HepG2 (cell line): ENCODE measurements at regions of chr7 and their contacts with region 1.

Region 1: DNA sequence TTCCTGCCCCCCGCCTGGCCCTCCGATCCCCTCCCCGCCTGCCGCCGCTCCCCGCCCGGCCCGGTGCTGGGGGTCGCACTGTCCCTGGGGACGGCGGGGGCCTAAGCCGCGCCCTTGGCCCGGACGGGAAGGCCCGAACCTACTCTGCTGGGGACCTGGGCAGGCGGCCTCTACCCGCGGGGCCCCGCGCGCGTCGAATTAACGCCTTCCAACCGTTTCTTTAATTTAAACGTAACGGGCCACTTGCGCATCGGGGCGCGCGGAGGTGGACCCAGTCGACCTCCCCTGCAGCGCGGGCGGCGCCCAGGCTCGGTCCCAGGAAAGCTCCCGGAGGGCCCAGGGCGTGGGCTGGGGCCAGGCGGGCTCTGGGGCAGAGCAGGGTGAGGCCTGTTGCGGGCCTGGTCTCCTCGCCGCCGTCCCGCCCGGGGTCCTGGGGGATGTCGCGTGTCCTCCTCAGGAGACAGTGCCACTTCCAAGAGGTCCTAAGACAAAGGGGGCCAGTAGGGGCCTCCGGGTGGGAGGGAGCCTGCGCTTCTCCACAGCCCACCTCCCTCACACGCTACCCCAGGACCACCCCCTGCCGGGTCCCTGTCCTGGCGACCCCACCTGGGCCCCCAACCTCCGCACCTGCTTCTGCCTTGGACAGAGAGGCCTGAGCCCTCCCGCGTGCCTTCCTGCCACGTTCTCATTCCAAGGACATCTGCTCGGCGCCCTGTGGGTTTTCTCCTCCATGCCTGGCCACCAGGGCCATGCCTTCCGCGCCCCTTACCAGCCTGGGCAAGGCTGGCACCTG is 658 bp upstream of the PTPRN2 start:
- DNase-seq: no peak
- ATAC-seq: 0 out of 3 replicates have a peak, but pooled peaks have one; percentile 0
- H3K4me3 ChIP-seq: peak overlapping the region in 1 of 3 experiments; percentile 29; a peak in 1 of 6 replicates
- H3K27ac ChIP-seq: peak overlapping the region; percentile 87
- H3K4me1 ChIP-seq: peaks cover 83% of the 10 kb centered on the region
- H3K27me3 ChIP-seq: no peaks in the 10 kb centered on the region; a peak in 1 of 5 replicates
- CTCF ChIP-seq: no peak
- EP300 ChIP-seq: no peak
- POLR2A ChIP-seq: no peak
- RAD21 ChIP-seq: no peak

Region 2: GRCh38 chr7:158633055-158633956 is 45.0 kb after region 1 on chr7:
- CTCF ChIA-PET with region 1: no interaction called
- POLR2A ChIA-PET with region 1: interaction called, 29 read pairs
- in situ Hi-C with region 1: no loop called
- intact Hi-C with region 1: loop called (anchors 5 kb)
- DNase-seq: no peak
- ATAC-seq: no peak; the same call in 1 of the 3 replicates
- H3K4me3 ChIP-seq: no peak overlapping the region
- H3K27ac ChIP-seq: no peak overlapping the region
- H3K4me1 ChIP-seq: peaks cover 17% of the 10 kb centered on the region
- H3K27me3 ChIP-seq: no peaks in the 10 kb centered on the region
- CTCF ChIP-seq: no peak
- EP300 ChIP-seq: no peak
- POLR2A ChIP-seq: no peak
- RAD21 ChIP-seq: no peak

Region 3: DNA sequence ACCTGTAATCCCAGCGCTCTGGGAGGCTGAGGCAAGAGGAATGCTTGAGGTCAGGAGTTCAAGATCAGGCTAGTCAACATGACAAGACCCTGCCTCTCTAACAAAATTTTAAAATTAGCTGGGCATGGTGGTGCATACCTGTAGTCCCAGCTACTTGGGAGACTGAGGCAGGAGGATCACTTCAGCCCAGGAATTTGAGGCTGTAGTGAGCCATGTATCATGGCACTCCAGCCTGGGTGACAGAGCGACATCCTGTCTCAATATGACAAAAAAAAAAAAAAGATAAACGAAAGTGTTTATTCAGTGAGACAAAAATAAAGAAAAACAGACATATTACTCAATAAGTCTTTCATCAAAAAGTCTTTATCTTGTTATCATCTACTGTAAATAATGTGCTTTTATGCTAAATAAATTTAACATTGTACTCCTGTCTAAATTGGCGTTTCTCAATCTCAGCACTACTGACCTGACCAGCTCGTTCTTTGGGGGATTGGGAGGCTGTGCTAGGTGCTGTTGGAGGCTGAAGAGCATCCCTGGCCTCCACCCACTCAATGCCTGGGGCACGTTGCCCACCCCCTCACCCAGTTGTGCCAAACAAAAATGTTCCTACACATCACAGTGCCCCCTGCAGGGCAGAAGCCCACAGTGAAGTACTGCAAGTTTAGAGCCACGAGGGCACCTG is 58.6 kb after region 1 on chr7:
- CTCF ChIA-PET with region 1: no interaction called
- POLR2A ChIA-PET with region 1: interaction called, 13 read pairs
- in situ Hi-C with region 1: loop called (anchors 5 kb)
- intact Hi-C with region 1: loop called (anchors 5 kb)
- DNase-seq: peak; percentile 39
- ATAC-seq: peak; percentile 85
- H3K4me3 ChIP-seq: no peak overlapping the region
- H3K27ac ChIP-seq: no peak overlapping the region
- H3K4me1 ChIP-seq: peaks cover 48% of the 10 kb centered on the region
- H3K27me3 ChIP-seq: no peaks in the 10 kb centered on the region
- CTCF ChIP-seq: peak; percentile 76
- EP300 ChIP-seq: peak in 1 of 2 experiments; percentile 50; a peak in 1 of 4 replicates
- POLR2A ChIP-seq: no peak
- RAD21 ChIP-seq: peak; percentile 66

Region 4: GRCh38 chr7:158704704-158705468 is 116.6 kb after region 1 on chr7 and contains the start of gene NCAPG2:
- CTCF ChIA-PET with region 1: no interaction called
- POLR2A ChIA-PET with region 1: interaction called, 5 read pairs
- in situ Hi-C with region 1: no loop called
- intact Hi-C with region 1: loop called (anchors 2 kb)
- DNase-seq: peak; percentile 94
- ATAC-seq: peak; percentile 96
- H3K4me3 ChIP-seq: peak within 1 kb of the TSS; percentile 77 to 99 (median 98)
- H3K27ac ChIP-seq: peak within 1 kb of the TSS; percentile 71
- H3K4me1 ChIP-seq: peaks cover 53% of the 10 kb centered on the region
- H3K27me3 ChIP-seq: no peaks in the 10 kb centered on the region; a peak in 1 of 5 replicates
- CTCF ChIP-seq: peak; percentile 41; the same call in 1 of the 2 replicates
- EP300 ChIP-seq: no peak
- POLR2A ChIP-seq: peak; percentile 34 to 84; a peak in 3 of 4 replicates
- RAD21 ChIP-seq: peak; percentile 35; the same call in 1 of the 2 replicates
- total RNA-seq, gene NCAPG2: 30.7 and 46.3 TPM in 2 replicates

Region 5: DNA sequence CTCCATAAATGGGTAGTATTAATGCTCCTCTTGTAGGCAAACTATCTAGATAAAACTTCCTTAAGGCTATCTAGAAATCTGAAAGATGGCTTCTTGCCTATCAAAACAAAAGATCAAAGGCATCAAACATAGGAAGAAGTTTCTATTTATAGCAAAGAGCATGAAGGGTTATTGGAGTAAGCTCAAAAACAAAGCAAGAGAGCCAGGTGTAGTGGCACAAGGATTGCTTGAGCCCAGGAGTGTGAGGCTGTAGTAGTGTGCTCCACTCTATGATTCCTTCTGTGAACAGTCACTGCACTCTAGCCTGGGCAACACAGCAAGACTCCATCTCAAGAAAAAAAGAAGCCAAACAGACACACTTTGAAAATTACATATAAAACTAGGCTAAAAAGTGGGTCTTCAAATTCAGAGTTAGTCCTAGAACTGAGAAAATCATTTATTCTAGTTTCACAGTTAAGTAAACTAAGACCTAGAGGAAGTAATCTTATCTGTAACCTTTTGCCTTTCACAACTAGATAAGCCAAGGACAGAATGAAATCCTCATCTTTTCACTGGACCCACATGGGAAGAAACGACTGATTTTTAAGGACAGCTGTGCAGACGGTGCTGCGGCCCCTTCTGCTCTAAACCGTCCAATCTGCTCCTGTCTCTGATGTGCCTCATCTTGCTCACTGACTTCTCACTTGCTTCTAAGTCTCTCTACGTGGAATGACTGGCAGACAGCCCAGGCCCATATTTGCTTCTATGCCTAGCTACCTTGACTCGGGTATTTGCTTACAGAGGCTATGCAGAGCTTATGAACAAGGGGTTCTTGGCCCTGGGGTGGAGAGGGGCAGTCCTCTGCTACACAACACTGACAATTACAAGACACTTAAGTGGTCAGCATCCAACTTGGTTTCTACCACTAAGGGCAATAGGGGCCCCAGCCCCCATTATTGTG is 191.1 kb after region 1 on chr7:
- CTCF ChIA-PET with region 1: no interaction called
- POLR2A ChIA-PET with region 1: no interaction called
- in situ Hi-C with region 1: no loop called
- intact Hi-C with region 1: no loop called
- DNase-seq: no peak
- ATAC-seq: no peak
- H3K4me3 ChIP-seq: no peak overlapping the region
- H3K27ac ChIP-seq: no peak overlapping the region
- H3K4me1 ChIP-seq: no peaks in the 10 kb centered on the region
- H3K27me3 ChIP-seq: no peaks in the 10 kb centered on the region
- CTCF ChIP-seq: no peak
- EP300 ChIP-seq: no peak
- POLR2A ChIP-seq: no peak
- RAD21 ChIP-seq: no peak